GM12878 (cell line): ENCODE measurements at regions of chr15 and their contacts with region 1.

Region 1: GRCh38 chr15:40274350-40275274 is 8.3 kb downstream of the ANKRD63 start:
- DNase-seq: peak; percentile 19
- ATAC-seq: peak; percentile 78
- H3K4me3 ChIP-seq: no peak overlapping the region
- H3K27ac ChIP-seq: no peak overlapping the region
- H3K4me1 ChIP-seq: peaks cover 6% of the 10 kb centered on the region
- H3K27me3 ChIP-seq: 0 out of 4 replicates have a peak, but pooled peaks cover 0 to 2% of the 10 kb centered on the region in 2 experiments
- CTCF ChIP-seq: peak; percentile 100; a peak in 5 of 6 replicates
- EP300 ChIP-seq: no peak
- POLR2A ChIP-seq: no peak
- RAD21 ChIP-seq: peak; percentile 98

Region 2: GRCh38 chr15:39782441-39783138 is 492.0 kb before region 1 on chr15 and contains the start of gene FSIP1:
- CTCF ChIA-PET with region 1: interaction called, 5 read pairs
- POLR2A ChIA-PET with region 1: no interaction called
- RAD21 ChIA-PET with region 1: no interaction called
- SMC1A ChIA-PET with region 1: interaction called, 3 read pairs
- in situ Hi-C with region 1: loop called (anchors 10 kb)
- intact Hi-C with region 1: loop called (anchors 2 kb)
- DNase-seq: peak; percentile 86
- ATAC-seq: peak; percentile 98
- H3K4me3 ChIP-seq: peak within 1 kb of the TSS; percentile 97
- H3K27ac ChIP-seq: peak within 1 kb of the TSS; percentile 93
- H3K4me1 ChIP-seq: peaks cover 7% of the 10 kb centered on the region
- H3K27me3 ChIP-seq: no peaks in the 10 kb centered on the region
- CTCF ChIP-seq: no peak
- EP300 ChIP-seq: peak in 1 of 2 experiments; percentile 27; a peak in 1 of 4 replicates
- POLR2A ChIP-seq: peak; percentile 93
- RAD21 ChIP-seq: no peak
- polyA plus RNA-seq, gene FSIP1: 0.15 to 0.27 TPM

Region 3: GRCh38 chr15:40038638-40039543 is 235.7 kb before region 1 on chr15 and contains the start of gene SRP14:
- CTCF ChIA-PET with region 1: interaction called, 144 read pairs
- POLR2A ChIA-PET with region 1: no interaction called
- RAD21 ChIA-PET with region 1: interaction called, 3 read pairs
- SMC1A ChIA-PET with region 1: interaction called, 9 read pairs
- in situ Hi-C with region 1: no loop called
- intact Hi-C with region 1: no loop called
- DNase-seq: peak; percentile 75
- ATAC-seq: peak; percentile 95
- H3K4me3 ChIP-seq: peak within 1 kb of the TSS; percentile 89
- H3K27ac ChIP-seq: peak within 1 kb of the TSS; percentile 79
- H3K4me1 ChIP-seq: peaks cover 9% of the 10 kb centered on the region
- H3K27me3 ChIP-seq: no peaks in the 10 kb centered on the region
- CTCF ChIP-seq: 0 out of 6 replicates have a peak, but pooled peaks of 1 of the 3 experiments have one; percentile 1
- EP300 ChIP-seq: 0 out of 4 replicates have a peak, but pooled peaks of 1 of the 2 experiments have one; percentile 3
- POLR2A ChIP-seq: peak; percentile 98
- RAD21 ChIP-seq: no peak
- polyA plus RNA-seq, gene SRP14: 1,041 to 1,182 TPM

Region 4: DNA sequence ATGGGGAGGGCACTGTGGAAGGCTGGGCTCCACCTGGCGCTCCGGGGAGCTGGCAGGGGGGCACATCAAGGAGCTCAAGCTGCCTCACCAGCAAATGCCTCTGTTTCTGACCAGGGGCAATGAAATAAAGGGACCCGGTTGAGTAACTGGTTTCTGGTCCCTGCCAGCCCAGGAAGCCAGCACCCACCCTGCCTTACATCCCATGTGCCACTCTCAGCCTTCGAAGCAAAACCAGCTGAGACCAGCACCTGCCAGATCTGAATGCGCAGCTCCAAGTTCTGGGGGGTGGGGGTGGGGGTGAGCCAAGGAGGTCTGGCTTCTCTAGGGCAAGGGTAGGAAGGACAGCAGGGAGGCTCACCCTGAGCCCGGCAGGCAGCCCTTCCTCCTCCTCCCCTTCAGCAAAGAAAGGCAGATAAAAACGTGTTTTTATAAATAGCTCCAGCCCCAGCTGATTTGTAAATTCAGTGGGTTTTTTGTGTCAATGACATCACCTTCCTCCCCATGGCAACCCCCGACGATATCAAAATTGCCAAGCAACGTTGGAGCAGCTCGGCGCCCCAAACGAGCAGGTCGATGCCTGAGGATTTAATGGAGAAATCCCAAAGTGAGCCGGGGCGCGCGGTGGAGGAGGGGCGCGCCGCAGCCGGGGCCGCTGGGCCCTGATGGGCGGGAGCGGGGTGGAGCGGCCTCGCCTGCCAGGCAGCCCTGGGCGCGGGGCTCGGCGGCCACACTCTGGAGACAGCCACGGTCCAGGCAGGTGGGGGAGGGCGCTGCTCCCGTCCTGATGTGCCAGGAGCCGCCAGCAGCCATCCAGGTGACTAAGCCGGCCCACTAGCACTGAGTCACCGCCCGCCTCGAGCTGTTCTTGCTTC is 35.8 kb before region 1 on chr15 and contains the start of gene PAK6:
- CTCF ChIA-PET with region 1: interaction called, 13 read pairs
- POLR2A ChIA-PET with region 1: no interaction called
- RAD21 ChIA-PET with region 1: interaction called, 4 read pairs
- SMC1A ChIA-PET with region 1: interaction called, 3 read pairs
- in situ Hi-C with region 1: no loop called
- intact Hi-C with region 1: no loop called
- DNase-seq: no peak
- ATAC-seq: peak; percentile 61
- H3K4me3 ChIP-seq: peak within 1 kb of the TSS; percentile 55
- H3K27ac ChIP-seq: no peak within 1 kb of the TSS
- H3K4me1 ChIP-seq: peaks cover 10% of the 10 kb centered on the region
- H3K27me3 ChIP-seq: no peaks in the 10 kb centered on the region; a peak in 1 of 4 replicates
- CTCF ChIP-seq: no peak
- EP300 ChIP-seq: no peak
- POLR2A ChIP-seq: no peak
- RAD21 ChIP-seq: no peak
- polyA plus RNA-seq, gene PAK6: 0.07 TPM in 1 of 2 experiments, not detected in the other

Region 5: DNA sequence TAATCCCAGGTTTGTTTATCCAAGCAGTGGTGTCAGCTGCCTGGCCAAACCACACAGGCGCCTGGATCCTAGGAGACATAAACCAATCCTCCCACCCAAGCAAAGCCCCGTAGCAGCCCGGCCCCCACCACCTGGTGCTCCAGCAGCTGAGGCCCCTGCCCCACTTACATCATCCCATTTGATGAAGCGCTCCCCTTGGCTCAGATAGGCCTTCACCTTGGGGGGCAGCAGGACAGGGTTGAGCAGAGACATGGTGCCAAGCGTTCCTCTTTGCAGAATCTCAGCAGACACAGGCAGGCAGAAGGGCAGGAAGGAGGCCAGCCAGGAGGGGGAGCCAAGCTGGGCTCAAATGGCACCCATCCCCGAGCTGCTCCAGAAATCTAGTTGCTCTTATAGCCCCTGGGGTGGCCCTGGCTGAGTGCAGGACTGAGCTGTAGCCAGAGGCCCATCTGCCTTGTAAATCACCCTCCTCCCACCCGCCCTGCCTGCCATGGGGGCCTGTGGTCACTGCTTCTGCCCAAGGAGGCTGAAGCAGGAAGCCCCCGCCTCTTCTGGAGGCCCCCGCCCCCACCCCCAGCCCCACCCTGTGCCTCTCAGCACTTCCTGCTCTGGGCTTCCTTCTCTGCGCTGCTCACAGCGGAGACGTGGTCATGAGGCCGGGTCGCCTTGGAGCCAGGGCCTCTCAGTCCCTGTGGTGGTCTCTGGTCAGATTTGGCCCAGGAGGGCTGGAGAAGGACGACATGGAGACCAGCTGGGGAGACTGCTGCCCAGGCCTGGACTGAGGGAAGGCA is 33.0 kb after region 1 on chr15 and contains the start of gene PLCB2:
- CTCF ChIA-PET with region 1: interaction called, 165 read pairs
- POLR2A ChIA-PET with region 1: no interaction called
- RAD21 ChIA-PET with region 1: interaction called, 87 read pairs
- SMC1A ChIA-PET with region 1: interaction called, 83 read pairs
- in situ Hi-C with region 1: loop called (anchors 5 kb)
- intact Hi-C with region 1: loop called (anchors 1 kb)
- DNase-seq: peak; percentile 16
- ATAC-seq: peak; percentile 78
- H3K4me3 ChIP-seq: peak within 1 kb of the TSS; percentile 80
- H3K27ac ChIP-seq: peak within 1 kb of the TSS; percentile 78
- H3K4me1 ChIP-seq: peaks cover 12% of the 10 kb centered on the region
- H3K27me3 ChIP-seq: peaks cover 0 to 1% of the 10 kb centered on the region in 2 experiments; a peak in 1 of 4 replicates
- CTCF ChIP-seq: peak; percentile 27 to 46 (median 39); a peak in 5 of 6 replicates
- EP300 ChIP-seq: no peak
- POLR2A ChIP-seq: peak; percentile 87
- RAD21 ChIP-seq: no peak
- polyA plus RNA-seq, gene PLCB2: 1.3 to 2.4 TPM

Region 6: GRCh38 chr15:40338041-40338657 is 63.5 kb after region 1 on chr15:
- CTCF ChIA-PET with region 1: interaction called, 171 read pairs
- POLR2A ChIA-PET with region 1: no interaction called
- RAD21 ChIA-PET with region 1: interaction called, 93 read pairs
- SMC1A ChIA-PET with region 1: interaction called, 58 read pairs
- in situ Hi-C with region 1: no loop called
- intact Hi-C with region 1: loop called (anchors 1 kb)
- DNase-seq: no peak
- ATAC-seq: peak; percentile 94
- H3K4me3 ChIP-seq: no peak overlapping the region
- H3K27ac ChIP-seq: no peak overlapping the region
- H3K4me1 ChIP-seq: peaks cover 9% of the 10 kb centered on the region
- H3K27me3 ChIP-seq: no peaks in the 10 kb centered on the region; a peak in 1 of 4 replicates
- CTCF ChIP-seq: peak; percentile 90 to 95 (median 92)
- EP300 ChIP-seq: no peak
- POLR2A ChIP-seq: no peak
- RAD21 ChIP-seq: peak; percentile 73

Region 7: GRCh38 chr15:40421246-40422157 is 146.9 kb after region 1 on chr15:
- CTCF ChIA-PET with region 1: interaction called, 19 read pairs
- POLR2A ChIA-PET with region 1: no interaction called
- RAD21 ChIA-PET with region 1: interaction called, 5 read pairs
- SMC1A ChIA-PET with region 1: no interaction called
- in situ Hi-C with region 1: no loop called
- intact Hi-C with region 1: loop called (anchors 5 kb)
- DNase-seq: no peak
- ATAC-seq: peak; percentile 99
- H3K4me3 ChIP-seq: no peak overlapping the region
- H3K27ac ChIP-seq: no peak overlapping the region
- H3K4me1 ChIP-seq: no peaks in the 10 kb centered on the region
- H3K27me3 ChIP-seq: no peaks in the 10 kb centered on the region
- CTCF ChIP-seq: peak; percentile 93 to 98 (median 97)
- EP300 ChIP-seq: no peak
- POLR2A ChIP-seq: peak; percentile 73
- RAD21 ChIP-seq: peak; percentile 95

Region 8: GRCh38 chr15:40660686-40661085 is 386.1 kb after region 1 on chr15:
- CTCF ChIA-PET with region 1: no interaction called
- POLR2A ChIA-PET with region 1: no interaction called
- RAD21 ChIA-PET with region 1: no interaction called
- SMC1A ChIA-PET with region 1: no interaction called
- in situ Hi-C with region 1: no loop called
- intact Hi-C with region 1: no loop called
- DNase-seq: no peak
- ATAC-seq: no peak
- H3K4me3 ChIP-seq: no peak overlapping the region
- H3K27ac ChIP-seq: no peak overlapping the region
- H3K4me1 ChIP-seq: no peaks in the 10 kb centered on the region
- H3K27me3 ChIP-seq: no peaks in the 10 kb centered on the region
- CTCF ChIP-seq: no peak
- EP300 ChIP-seq: no peak
- POLR2A ChIP-seq: no peak
- RAD21 ChIP-seq: no peak